GM10248 (cell line): ENCODE measurements at regions of chr15 and their contacts with region 1.

Region 1: DNA sequence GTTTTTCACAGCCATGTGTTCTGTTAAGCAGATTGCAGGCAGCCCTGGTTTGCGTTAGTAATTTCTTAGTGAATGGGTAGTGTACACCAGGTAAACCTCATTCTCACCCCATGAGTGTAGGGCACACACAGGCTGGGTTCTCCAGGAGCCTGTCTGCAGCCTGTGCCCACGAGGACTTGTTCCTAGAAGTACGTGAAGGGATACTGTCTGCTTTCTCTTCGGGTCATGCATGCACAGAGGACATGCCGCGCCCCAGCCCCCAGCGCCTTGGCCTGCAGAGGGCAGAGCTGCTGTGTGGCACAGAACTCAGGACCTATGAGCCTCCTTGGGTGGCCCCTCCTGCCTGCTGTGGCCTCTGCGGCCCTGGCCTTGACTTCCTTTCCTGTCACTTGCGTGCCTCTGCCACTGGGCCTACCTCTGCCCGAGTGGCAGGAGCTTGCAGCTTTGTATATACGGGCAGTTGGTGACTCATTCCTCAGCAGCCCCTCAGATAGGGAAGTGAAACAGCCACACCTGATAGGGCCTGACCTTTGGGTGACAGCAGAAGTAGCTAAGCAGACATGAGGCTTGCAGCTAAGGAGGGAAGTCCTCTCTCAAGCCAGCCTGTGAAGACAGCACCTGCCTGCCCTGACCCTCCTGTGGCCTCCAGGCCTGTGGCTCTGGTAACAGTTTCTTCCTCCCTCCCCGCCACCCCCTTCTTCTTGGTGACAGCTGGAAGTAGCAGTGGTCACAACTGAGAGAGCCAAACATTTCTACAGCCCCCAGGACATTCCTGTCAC is 19.5 kb downstream of the PPCDC start:
- DNase-seq: peak; percentile 89
- CTCF ChIP-seq: peak; percentile 88

Region 2: GRCh38 chr15:75023181-75023871 is 19.6 kb before region 1 on chr15 and contains the start of gene PPCDC:
- CTCF ChIA-PET with region 1: interaction called, 16 read pairs
- POLR2A ChIA-PET with region 1: interaction called, 7 read pairs
- DNase-seq: peak; percentile 98
- CTCF ChIP-seq: no peak

Region 3: DNA sequence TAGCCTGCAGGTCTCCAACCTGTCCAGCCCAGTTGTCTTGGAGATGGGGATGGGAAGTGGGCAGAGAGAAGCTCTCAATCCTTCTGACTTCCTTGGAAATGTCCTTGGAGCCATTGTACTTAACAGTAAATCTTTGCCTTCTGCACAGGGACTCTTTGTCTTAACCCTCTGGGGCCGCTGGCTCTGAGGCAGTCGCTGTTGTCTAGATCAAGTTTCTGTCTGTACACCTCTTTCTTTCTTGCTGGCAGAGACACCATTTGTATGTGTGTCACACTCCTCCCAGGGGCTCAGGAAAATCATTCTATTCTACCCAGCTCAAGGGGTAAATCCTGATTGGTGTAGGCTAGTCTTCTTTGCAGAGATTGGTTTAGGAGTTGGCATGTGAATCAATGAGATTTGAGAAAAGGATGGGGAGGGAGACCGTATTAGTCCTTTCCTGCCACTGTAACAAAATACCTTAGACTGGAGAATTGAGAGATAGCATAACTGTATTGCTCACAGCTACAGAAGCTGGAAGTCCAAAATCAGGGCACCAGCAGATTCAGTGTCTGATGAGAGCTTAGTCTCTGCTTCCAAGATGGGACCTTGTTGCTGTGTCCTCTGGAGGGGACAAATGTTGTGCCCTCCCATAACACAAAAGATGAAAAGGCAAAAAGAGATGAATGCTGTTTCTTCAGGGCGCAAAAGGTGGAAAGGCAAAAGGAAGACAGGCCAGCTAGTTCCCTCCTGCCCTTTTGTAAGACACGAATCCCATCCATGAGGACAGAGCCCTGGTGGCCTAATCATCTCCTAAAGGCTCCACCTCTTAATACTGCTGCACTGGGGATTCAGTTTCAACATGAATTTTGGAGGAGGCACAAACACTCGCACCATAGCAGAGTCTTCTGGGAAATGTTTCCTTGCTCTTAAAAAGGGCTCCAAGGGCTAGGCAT is 46.8 kb after region 1 on chr15:
- CTCF ChIA-PET with region 1: interaction called, 14 read pairs
- POLR2A ChIA-PET with region 1: no interaction called
- DNase-seq: no peak
- CTCF ChIP-seq: no peak

Region 4: GRCh38 chr15:75112278-75112847 is 69.4 kb after region 1 on chr15:
- CTCF ChIA-PET with region 1: interaction called, 52 read pairs
- POLR2A ChIA-PET with region 1: interaction called, 11 read pairs
- DNase-seq: peak; percentile 8
- CTCF ChIP-seq: no peak

Region 5: DNA sequence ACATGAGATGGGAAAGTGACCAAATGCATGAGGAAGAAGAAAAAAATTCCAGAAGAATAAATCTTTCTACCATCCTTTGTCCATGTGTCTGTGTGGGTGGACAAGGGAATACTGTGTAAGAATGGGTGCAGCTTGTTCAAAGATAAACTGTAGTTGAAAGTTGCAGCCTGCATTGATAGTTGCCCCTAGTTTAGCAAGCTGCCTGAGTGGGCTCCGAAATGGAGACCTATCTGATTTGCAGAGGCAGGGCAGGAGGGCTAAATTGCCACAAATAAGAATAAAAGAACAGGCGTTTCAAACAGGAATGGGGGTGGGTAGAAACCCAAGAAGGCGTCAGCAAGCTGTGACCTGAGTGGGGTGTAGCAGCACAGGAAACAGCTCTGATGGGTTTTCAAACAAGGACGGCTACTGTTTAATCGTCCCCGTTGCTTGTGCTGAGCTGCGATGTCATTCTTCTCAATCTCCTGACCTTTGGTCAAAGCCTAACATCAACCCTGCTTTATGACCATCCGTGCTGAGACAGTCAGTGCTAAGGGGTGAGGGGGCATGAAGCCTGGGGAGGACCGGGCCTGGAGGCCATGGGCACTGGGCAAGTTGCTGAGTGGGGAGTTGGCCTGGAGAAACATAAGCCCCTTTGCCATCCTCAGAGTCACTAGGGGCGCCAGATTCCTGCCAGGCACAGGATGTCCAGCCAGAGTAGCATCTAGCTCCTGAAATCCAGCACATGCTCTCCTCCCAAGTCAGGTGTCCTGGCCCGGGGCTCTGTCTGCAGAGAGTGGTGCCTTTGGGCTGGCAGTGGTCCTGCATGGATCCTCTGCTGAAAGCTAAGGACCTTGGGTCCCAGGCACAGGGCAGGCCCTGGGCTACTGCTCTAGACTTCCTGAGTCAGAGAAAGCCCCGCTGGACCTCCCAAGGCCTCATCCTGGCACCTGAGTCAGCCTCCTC is 139.5 kb after region 1 on chr15:
- CTCF ChIA-PET with region 1: interaction called, 10 read pairs
- POLR2A ChIA-PET with region 1: no interaction called
- DNase-seq: no peak
- CTCF ChIP-seq: no peak

Region 6: GRCh38 chr15:75215107-75216004 is 172.4 kb after region 1 on chr15:
- CTCF ChIA-PET with region 1: interaction called, 14 read pairs
- POLR2A ChIA-PET with region 1: interaction called, 6 read pairs
- DNase-seq: no peak
- CTCF ChIP-seq: no peak